ENCODE measurements at regions of chr5 and their contacts with region 1.

Region 1: GRCh38 chr5:119290161-119290569 is 65.7 kb upstream of the TNFAIP8 start:
- DNase-seq: no peak
- H3K4me3 Mint-ChIP-seq: no peak overlapping the region
- H3K27ac Mint-ChIP-seq: no peak overlapping the region
- H3K4me1 Mint-ChIP-seq: peaks cover 42% of the 10 kb centered on the region
- H3K27me3 Mint-ChIP-seq: no peaks in the 10 kb centered on the region
- CTCF ChIP-seq: no peak

Region 2: GRCh38 chr5:119274767-119275130 is 15.4 kb before region 1 on chr5:
- CTCF ChIA-PET with region 1: interaction called, 8 read pairs
- POLR2A ChIA-PET with region 1: interaction called, 48 read pairs
- intact Hi-C with region 1: no loop called
- DNase-seq: peak; percentile 80
- H3K4me3 Mint-ChIP-seq: no peak overlapping the region
- H3K27ac Mint-ChIP-seq: peak overlapping the region; percentile 80
- H3K4me1 Mint-ChIP-seq: peaks cover 35% of the 10 kb centered on the region
- H3K27me3 Mint-ChIP-seq: no peaks in the 10 kb centered on the region
- CTCF ChIP-seq: no peak

Measured in MCF 10A (cell line).